CD14-positive monocyte (primary cell): ENCODE measurements at regions of chr3 and their contacts with region 1.

Region 1: DNA sequence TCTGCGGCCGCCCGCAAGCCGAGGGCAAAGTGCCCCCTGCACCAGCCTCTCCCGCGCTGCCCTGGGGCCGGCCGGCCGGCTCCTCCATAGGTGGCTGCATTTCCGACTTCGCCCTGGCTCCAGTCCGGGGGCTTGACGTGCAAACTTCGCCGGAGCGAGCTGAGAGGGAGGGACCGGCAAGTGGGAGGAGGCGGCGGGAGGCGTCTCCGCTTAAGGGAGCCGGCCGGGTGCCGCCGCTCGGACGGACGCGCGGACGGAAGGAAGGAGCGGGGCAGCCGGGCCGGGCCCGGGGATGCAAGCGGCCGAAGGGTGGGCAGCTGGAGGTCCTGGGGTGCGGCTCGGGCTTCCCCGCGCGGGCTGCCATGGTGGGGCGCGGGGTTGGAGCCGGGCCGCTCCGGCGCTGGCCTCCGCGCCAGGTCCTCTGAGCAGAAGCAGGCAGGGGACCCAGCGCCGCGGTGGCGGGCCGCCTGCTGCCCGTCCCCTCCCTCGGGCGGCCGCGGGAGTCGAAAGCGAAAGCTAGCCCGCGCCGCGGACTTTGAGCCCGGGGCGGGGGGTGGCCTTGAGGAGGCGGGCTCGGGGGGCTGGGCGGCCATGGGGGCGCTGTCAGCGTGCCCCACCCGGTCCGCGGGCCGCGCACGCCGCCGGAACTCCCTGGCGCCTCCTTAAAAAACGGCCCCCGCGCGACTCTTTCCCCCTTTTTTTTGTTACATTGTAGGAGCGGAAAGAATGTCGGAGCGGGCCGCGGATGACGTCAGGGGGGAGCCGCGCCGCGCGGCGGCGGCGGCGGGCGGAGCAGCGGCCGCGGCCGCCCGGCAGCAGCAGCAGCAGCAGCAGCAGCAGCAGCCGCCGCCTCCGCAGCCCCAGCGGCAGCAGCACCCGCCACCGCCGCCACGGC is at the start of gene SCAANT1:
- DNase-seq: peak; percentile 69 to 75 (median 75)
- H3K4me3 ChIP-seq: peak within 1 kb of the TSS; percentile 77 to 89 (median 84)
- H3K4me3 Mint-ChIP-seq: peak within 1 kb of the TSS; percentile 92 to 95
- H3K27ac ChIP-seq: peak within 1 kb of the TSS; percentile 81 to 91
- H3K27ac Mint-ChIP-seq: peak within 1 kb of the TSS; percentile 89 to 96 (median 94)
- H3K4me1 ChIP-seq: peaks cover 33 to 46% of the 10 kb centered on the region in 2 donors
- H3K4me1 Mint-ChIP-seq: peaks cover 43% of the 10 kb centered on the region
- H3K27me3 ChIP-seq: no peaks in the 10 kb centered on the region
- H3K27me3 Mint-ChIP-seq: peaks cover 0 to 4% (median 0%) of the 10 kb centered on the region in 3 donors
- CTCF ChIP-seq: no peak
- polyA plus RNA-seq, gene SCAANT1: not detected

Region 2: DNA sequence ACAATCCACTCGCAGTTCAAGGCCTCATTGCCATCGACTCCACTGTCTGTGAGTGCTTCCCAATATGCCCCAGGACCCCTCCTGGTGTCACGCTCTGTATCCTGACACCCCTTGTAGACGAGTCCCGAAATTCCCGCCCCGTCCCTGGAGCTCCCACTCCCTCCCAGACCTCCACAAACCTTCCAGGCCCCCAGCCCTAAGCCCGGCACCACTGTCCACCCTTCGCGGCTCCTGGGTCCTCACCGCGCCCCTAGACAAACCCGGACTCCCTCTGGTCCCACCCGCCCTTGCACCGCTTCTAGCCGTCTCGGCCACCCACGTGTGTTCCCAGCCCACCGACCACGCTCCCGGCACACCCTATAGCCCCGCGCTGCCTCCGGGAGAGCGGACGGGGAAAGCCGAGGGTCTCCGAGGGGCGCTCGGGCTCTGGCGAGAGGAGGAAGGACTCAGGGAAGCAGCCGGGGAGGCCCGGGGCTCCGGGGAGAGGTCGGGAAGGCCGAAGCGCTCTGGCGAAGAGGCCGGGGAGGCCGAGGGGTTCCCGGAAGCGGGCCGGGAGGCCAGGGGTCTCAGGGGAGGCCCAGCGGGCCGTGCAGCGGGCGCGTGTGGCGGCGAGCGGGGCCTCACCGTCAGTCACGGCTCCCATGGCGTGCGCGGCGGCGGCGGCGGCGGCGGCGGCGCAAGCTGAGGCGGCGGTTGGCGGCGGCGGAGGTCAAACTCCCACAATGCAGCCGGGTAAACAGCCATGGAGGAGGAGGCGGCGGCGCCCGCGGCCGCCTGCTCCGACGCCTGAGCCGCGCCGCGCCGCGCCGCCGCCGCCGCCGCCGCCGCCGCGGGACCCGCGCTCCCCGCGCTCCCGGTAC is 48.7 kb before region 1 on chr3 and contains the starts of genes ATXN7 and THOC7:
- intact Hi-C with region 1: loop called in 1 of 2 experiments (anchors 2 kb)
- DNase-seq: peak; percentile 36 to 60 (median 58)
- H3K4me3 ChIP-seq: peak within 1 kb of the TSS; percentile 90 to 93 (median 92)
- H3K4me3 Mint-ChIP-seq: peak within 1 kb of the TSS; percentile 96 to 97
- H3K27ac ChIP-seq: peak within 1 kb of the TSS; percentile 85 to 95
- H3K27ac Mint-ChIP-seq: peak within 1 kb of the TSS; percentile 89 to 97 (median 97)
- H3K4me1 ChIP-seq: peaks cover 22 to 26% of the 10 kb centered on the region in 2 donors
- H3K4me1 Mint-ChIP-seq: peaks cover 36% of the 10 kb centered on the region
- H3K27me3 ChIP-seq: no peaks in the 10 kb centered on the region
- H3K27me3 Mint-ChIP-seq: peaks cover 0 to 3% (median 3%) of the 10 kb centered on the region in 3 donors
- CTCF ChIP-seq: no peak
- polyA plus RNA-seq, gene ATXN7: 2.7 to 29.5 (median 3.2) TPM
- polyA plus RNA-seq, gene THOC7: 22.2 to 74.8 (median 70.1) TPM

Region 3: GRCh38 chr3:63877737-63878393 is 34.3 kb before region 1 on chr3:
- intact Hi-C with region 1: loop called in 1 of 2 experiments (anchors 5 kb)
- DNase-seq: no peak
- H3K4me3 ChIP-seq: no peak overlapping the region
- H3K4me3 Mint-ChIP-seq: no peak overlapping the region
- H3K27ac ChIP-seq: peak overlapping the region in 1 of 2 donors; percentile 22
- H3K27ac Mint-ChIP-seq: peak overlapping the region in 2 of 7 donors; percentile 22 to 44
- H3K4me1 ChIP-seq: peaks cover 7 to 9% of the 10 kb centered on the region in 2 donors
- H3K4me1 Mint-ChIP-seq: peaks cover 23% of the 10 kb centered on the region
- H3K27me3 ChIP-seq: no peaks in the 10 kb centered on the region
- H3K27me3 Mint-ChIP-seq: peaks cover 0 to 2% (median 0%) of the 10 kb centered on the region in 3 donors
- CTCF ChIP-seq: no peak

Region 4: GRCh38 chr3:63933459-63933858 is 21.3 kb after region 1 on chr3:
- intact Hi-C with region 1: loop called in 1 of 2 experiments (anchors 2 kb)
- DNase-seq: peak; percentile 44 to 69 (median 60)
- H3K4me3 ChIP-seq: peak overlapping the region in 1 of 3 experiments; percentile 61
- H3K4me3 Mint-ChIP-seq: peak overlapping the region; percentile 41 to 83
- H3K27ac ChIP-seq: peak overlapping the region in 1 of 2 donors; percentile 79
- H3K27ac Mint-ChIP-seq: peak overlapping the region; percentile 90 to 97 (median 95)
- H3K4me1 ChIP-seq: peaks cover 75 to 87% of the 10 kb centered on the region in 2 donors
- H3K4me1 Mint-ChIP-seq: peaks cover 92% of the 10 kb centered on the region
- H3K27me3 ChIP-seq: no peaks in the 10 kb centered on the region
- H3K27me3 Mint-ChIP-seq: peaks cover 0 to 2% (median 0%) of the 10 kb centered on the region in 3 donors
- CTCF ChIP-seq: no peak

Region 5: DNA sequence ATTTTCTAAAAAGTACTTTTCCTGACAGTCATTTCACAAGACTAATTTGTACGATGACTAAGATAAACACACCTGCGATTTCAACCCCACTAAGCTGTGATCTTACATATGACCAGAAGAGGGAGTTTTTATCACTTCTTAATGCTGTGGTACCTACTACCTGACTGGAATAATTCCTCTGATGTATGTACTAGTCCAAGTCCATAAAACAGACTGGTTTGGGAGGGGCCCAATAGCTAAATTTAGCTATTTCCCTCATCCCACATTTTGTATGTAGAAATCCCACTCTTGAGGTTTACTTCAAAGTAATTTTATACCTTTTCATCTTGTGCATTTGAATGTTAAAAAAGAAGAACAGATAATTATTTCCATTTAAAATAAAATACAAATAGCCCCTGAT is 49.8 kb after region 1 on chr3:
- intact Hi-C with region 1: loop called in 1 of 2 experiments (anchors 5 kb)
- DNase-seq: peak in 2 of 3 donors; percentile 42 to 49
- H3K4me3 ChIP-seq: no peak overlapping the region
- H3K4me3 Mint-ChIP-seq: no peak overlapping the region
- H3K27ac ChIP-seq: no peak overlapping the region
- H3K27ac Mint-ChIP-seq: peak overlapping the region in 1 of 7 donors; percentile 30
- H3K4me1 ChIP-seq: peaks cover 15 to 18% of the 10 kb centered on the region in 2 donors
- H3K4me1 Mint-ChIP-seq: peaks cover 30% of the 10 kb centered on the region
- H3K27me3 ChIP-seq: no peaks in the 10 kb centered on the region
- H3K27me3 Mint-ChIP-seq: no peaks in the 10 kb centered on the region
- CTCF ChIP-seq: peak; percentile 90

Region 6: DNA sequence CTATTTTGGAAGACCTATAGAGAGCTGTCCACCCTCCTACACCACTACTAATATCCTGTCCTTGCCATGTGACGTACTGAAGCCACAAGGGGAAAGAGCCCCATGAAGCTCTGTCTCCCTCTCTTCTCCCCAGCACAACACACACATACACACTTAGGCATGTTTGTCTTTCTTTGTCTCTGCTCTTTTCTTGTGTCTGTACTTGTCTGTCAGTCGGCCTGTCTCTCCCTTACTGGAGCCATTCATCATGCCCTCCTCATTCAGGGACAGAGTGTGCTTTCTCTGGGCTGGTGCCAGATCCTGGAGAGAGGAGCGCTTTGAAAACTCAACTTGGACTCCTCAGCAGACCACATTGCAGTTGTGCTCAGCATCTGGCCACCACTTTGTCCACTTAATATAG is 63.6 kb after region 1 on chr3:
- intact Hi-C with region 1: loop called (anchors 2 to 5 kb)
- DNase-seq: peak in 1 of 3 donors; percentile 28
- H3K4me3 ChIP-seq: peak overlapping the region in 1 of 3 experiments; percentile 44
- H3K4me3 Mint-ChIP-seq: no peak overlapping the region
- H3K27ac ChIP-seq: peak overlapping the region; percentile 40 to 85
- H3K27ac Mint-ChIP-seq: peak overlapping the region; percentile 94 to 97 (median 95)
- H3K4me1 ChIP-seq: peaks cover 57 to 63% of the 10 kb centered on the region in 2 donors
- H3K4me1 Mint-ChIP-seq: peaks cover 73% of the 10 kb centered on the region
- H3K27me3 ChIP-seq: no peaks in the 10 kb centered on the region
- H3K27me3 Mint-ChIP-seq: peaks cover 0 to 3% (median 0%) of the 10 kb centered on the region in 3 donors
- CTCF ChIP-seq: no peak

Region 7: DNA sequence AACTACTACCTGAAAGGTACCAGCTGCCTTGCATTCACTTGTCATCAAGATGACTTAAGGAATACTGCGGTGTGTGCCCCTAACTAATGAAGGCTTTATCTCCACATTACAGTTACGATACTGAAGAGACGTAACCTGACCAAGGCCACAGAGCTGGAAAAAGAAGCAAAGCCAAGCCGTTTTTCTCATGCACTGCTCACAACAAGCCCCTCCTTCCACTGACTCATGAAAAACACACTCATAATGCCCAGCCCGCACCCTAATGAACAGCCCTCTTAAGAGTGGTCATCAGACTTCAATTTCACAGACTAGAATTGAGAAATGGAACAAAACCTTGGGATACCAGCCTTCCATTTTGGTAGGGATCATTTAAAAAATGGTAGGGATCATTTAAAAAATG is 99.6 kb after region 1 on chr3:
- intact Hi-C with region 1: no loop called
- DNase-seq: no peak
- H3K4me3 ChIP-seq: no peak overlapping the region
- H3K4me3 Mint-ChIP-seq: no peak overlapping the region
- H3K27ac ChIP-seq: peak overlapping the region in 1 of 2 donors; percentile 20
- H3K27ac Mint-ChIP-seq: peak overlapping the region in 2 of 7 donors; percentile 36 to 61
- H3K4me1 ChIP-seq: peaks cover 5 to 15% of the 10 kb centered on the region in 2 donors
- H3K4me1 Mint-ChIP-seq: peaks cover 8% of the 10 kb centered on the region
- H3K27me3 ChIP-seq: no peaks in the 10 kb centered on the region
- H3K27me3 Mint-ChIP-seq: peaks cover 0 to 3% (median 0%) of the 10 kb centered on the region in 3 donors
- CTCF ChIP-seq: no peak